ENCODE measurements at regions of chr12 and their contacts with region 1.

Region 1: DNA sequence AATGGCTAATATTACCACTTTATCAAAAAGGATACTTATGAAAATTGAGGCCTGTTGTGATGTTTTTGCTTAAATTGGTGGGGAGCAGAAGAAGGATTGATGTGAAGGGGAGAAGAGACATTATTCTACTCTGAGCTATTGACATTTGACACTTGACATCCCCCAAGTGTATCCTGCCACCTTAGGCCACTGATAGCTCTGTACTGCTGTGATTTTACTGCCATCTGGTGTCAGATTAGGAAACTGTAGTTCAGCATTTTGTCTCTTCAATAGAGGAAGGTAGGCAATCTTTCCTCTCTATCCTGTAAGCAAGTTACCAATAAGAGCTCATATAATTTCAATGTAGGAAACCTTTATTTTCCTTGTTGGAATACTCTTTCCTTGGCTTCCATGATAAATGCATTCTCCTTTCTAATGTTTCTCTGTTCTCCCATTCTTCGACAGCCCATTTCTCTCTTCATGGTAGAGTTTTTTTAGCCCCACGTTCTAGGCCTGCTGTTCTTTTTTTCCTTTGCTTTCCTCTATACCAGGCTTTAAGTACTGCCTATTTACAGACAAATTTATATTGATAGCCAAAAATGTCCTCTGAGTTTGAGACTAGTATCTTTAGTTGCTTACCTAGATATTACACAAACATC is 46.3 kb downstream of the PPHLN1 start:
- DNase-seq: peak; percentile 49
- ATAC-seq: peak; percentile 99
- H3K4me3 ChIP-seq: no peak overlapping the region
- H3K27ac ChIP-seq: no peak overlapping the region
- H3K4me1 ChIP-seq: peaks cover 4% of the 10 kb centered on the region
- H3K27me3 ChIP-seq: no peaks in the 10 kb centered on the region
- CTCF ChIP-seq: peak; percentile 71 to 86 (median 83)
- EP300 ChIP-seq: no peak
- POLR2A ChIP-seq: no peak
- RAD21 ChIP-seq: peak; percentile 96

Region 2: GRCh38 chr12:41277116-41277945 is 1094.9 kb before region 1 on chr12:
- CTCF ChIA-PET with region 1: interaction called, 22 read pairs
- POLR2A ChIA-PET with region 1: no interaction called
- RAD21 ChIA-PET with region 1: interaction called, 4 read pairs
- SMC1A ChIA-PET with region 1: interaction called, 8 read pairs
- in situ Hi-C with region 1: loop called (anchors 25 kb)
- intact Hi-C with region 1: loop called (anchors 5 kb)
- DNase-seq: no peak
- ATAC-seq: peak; percentile 64; the same call in 2 of the 3 replicates
- H3K4me3 ChIP-seq: no peak overlapping the region
- H3K27ac ChIP-seq: no peak overlapping the region
- H3K4me1 ChIP-seq: no peaks in the 10 kb centered on the region
- H3K27me3 ChIP-seq: no peaks in the 10 kb centered on the region
- CTCF ChIP-seq: peak; percentile 52 to 81 (median 54)
- EP300 ChIP-seq: no peak
- POLR2A ChIP-seq: no peak
- RAD21 ChIP-seq: peak; percentile 85

Region 3: DNA sequence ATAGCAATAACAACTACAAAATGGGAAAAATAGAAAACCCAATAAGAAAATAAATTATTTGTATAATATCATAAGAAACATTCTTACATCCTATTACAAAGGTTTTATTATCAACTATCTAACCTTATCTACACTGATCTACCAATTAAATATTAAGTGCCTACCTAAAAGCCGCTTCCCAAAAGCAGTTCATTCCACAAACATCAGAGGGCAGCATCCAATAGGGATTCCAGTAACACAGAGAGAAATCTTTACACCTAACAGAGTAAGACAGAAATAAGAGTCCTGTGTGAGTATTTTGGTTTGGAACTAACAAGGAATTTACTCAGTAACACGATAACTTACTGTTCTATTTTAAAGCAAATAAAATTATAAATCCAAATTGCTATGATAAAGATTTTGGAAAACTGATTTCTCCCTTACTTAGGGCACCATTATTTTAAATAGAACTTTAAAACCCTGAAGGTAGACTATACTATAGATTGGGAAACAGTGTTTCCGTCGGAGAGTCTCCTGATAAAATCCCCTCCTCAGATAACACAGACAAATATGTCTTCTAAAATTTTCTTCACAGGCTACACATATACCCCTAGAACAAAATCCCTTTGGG is 242.6 kb before region 1 on chr12:
- CTCF ChIA-PET with region 1: interaction called, 7 read pairs
- POLR2A ChIA-PET with region 1: no interaction called
- RAD21 ChIA-PET with region 1: interaction called, 12 read pairs
- SMC1A ChIA-PET with region 1: interaction called, 10 read pairs
- in situ Hi-C with region 1: no loop called
- intact Hi-C with region 1: loop called (anchors 1 kb)
- DNase-seq: no peak
- ATAC-seq: peak; percentile 32; the same call in 2 of the 3 replicates
- H3K4me3 ChIP-seq: no peak overlapping the region
- H3K27ac ChIP-seq: no peak overlapping the region
- H3K4me1 ChIP-seq: no peaks in the 10 kb centered on the region
- H3K27me3 ChIP-seq: no peaks in the 10 kb centered on the region
- CTCF ChIP-seq: peak; percentile 36 to 69 (median 47); a peak in 5 of 6 replicates
- EP300 ChIP-seq: no peak
- POLR2A ChIP-seq: no peak
- RAD21 ChIP-seq: peak; percentile 92

Region 4: GRCh38 chr12:42332301-42333285 is 39.7 kb before region 1 on chr12:
- CTCF ChIA-PET with region 1: interaction called, 20 read pairs
- POLR2A ChIA-PET with region 1: no interaction called
- RAD21 ChIA-PET with region 1: interaction called, 11 read pairs
- SMC1A ChIA-PET with region 1: interaction called, 9 read pairs
- in situ Hi-C with region 1: no loop called
- intact Hi-C with region 1: loop called (anchors 5 kb)
- DNase-seq: no peak
- ATAC-seq: peak; percentile 81
- H3K4me3 ChIP-seq: no peak overlapping the region
- H3K27ac ChIP-seq: no peak overlapping the region
- H3K4me1 ChIP-seq: peaks cover 2% of the 10 kb centered on the region
- H3K27me3 ChIP-seq: no peaks in the 10 kb centered on the region
- CTCF ChIP-seq: peak; percentile 50 to 67 (median 53)
- EP300 ChIP-seq: no peak
- POLR2A ChIP-seq: no peak
- RAD21 ChIP-seq: peak; percentile 88

Region 5: DNA sequence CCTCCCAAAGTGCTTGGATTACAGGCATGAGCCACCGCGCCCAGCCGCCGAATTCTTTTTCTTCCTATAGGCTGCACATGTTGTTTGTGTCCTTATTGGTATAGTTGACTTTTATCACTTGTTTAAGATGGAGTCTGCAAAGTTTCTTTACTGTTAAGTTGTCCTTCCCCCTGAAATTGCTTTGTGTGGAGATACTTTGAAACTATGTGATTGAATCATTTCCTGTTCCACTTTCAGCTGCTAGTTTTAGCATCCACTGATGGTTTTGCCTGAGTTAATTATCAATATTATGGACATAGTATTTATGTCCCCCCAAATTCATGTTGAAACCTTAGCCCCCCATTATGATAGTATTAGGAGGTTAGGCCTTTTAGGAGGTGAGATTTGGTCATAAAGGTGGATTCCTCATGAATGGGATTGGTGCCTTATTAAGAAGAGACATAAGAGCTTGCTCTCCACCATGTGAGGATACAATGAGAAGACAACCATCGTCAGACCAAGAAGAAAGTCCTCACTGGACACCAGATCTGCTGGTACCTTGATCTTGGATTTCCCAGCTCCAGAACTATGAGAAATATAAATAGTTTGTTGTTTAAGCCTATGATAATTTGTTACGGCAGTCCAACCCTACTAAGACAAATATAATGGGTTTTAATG is 11.4 kb before region 1 on chr12:
- CTCF ChIA-PET with region 1: interaction called, 42 read pairs
- POLR2A ChIA-PET with region 1: interaction called, 4 read pairs
- RAD21 ChIA-PET with region 1: interaction called, 11 read pairs
- SMC1A ChIA-PET with region 1: interaction called, 18 read pairs
- in situ Hi-C with region 1: no loop called
- intact Hi-C with region 1: no loop called
- DNase-seq: no peak
- ATAC-seq: peak; percentile 89
- H3K4me3 ChIP-seq: no peak overlapping the region
- H3K27ac ChIP-seq: peak overlapping the region; percentile 50
- H3K4me1 ChIP-seq: peaks cover 19% of the 10 kb centered on the region
- H3K27me3 ChIP-seq: no peaks in the 10 kb centered on the region
- CTCF ChIP-seq: no peak
- EP300 ChIP-seq: 0 out of 4 replicates have a peak, but pooled peaks of 1 of the 2 experiments have one; percentile 23
- POLR2A ChIP-seq: no peak
- RAD21 ChIP-seq: no peak